Activated CD8-positive, alpha-beta T cell treated with anti-CD3 and anti-CD28 coated beads for 36 hours (primary cell): ENCODE measurements at regions of chr17 and their contacts with region 1.

Region 1: DNA sequence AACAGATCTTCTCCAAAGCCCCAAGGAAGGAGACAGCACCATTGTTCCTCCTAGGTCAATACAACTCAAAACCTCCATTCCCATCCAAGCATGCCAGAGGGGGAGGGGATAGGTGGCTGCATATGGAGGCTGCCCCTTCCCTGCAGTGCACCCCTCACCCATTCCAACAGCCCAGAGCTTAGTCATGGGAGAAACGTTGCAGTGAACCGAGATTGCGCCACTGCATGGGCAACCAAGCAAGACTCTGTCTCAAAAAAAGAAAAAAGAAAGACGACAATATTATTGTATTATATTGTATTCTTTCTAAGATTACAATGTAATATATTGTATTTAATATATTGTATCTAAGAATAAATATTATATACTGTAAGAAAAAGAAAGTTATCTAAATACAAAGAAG is 36.4 kb upstream of the CD300E start:
- DNase-seq: no peak
- ATAC-seq: no peak
- H3K4me3 Mint-ChIP-seq: no peak overlapping the region
- H3K27ac Mint-ChIP-seq: no peak overlapping the region
- H3K4me1 Mint-ChIP-seq: peaks cover 3% of the 10 kb centered on the region
- H3K27me3 Mint-ChIP-seq: peaks cover 17% of the 10 kb centered on the region
- CTCF ChIP-seq: no peak

Region 2: DNA sequence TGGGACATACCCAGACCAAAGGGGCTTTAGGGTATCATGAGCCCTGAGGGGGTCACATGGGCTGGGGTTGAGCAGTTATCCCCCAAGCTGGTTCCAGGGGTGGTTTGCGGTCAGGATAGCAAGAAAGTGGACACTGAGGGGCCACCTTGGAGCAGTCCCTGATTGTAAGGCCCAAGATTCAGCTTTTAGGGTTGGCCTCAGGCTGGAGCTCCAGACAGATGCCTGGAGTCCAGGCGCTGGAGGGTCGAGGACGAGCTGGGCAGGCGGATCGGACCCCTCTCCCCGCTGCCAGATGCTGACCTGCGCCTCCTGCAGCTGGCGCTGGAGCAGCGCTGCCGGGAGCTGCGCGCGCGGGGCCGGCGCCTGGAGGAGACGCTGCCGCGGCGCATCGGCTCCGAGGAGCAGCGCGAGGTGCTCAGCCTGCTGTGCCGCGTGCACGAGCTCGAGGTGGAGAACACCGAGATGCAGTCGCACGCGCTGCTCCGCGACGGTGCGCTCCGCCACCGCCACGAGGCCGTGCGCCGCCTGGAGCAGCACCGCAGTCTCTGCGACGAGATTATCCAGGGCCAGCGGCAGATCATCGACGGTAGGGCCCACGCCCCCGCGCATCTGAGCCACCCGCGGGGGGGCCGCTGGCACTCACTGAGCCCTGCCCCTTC is 308.2 kb before region 1 on chr17:
- CTCF ChIA-PET with region 1: no interaction called
- POLR2A ChIA-PET with region 1: no interaction called
- intact Hi-C with region 1: no loop called
- DNase-seq: peak; percentile 11
- ATAC-seq: peak; percentile 32
- H3K4me3 Mint-ChIP-seq: no peak overlapping the region
- H3K27ac Mint-ChIP-seq: no peak overlapping the region
- H3K4me1 Mint-ChIP-seq: peaks cover 6% of the 10 kb centered on the region
- H3K27me3 Mint-ChIP-seq: peaks cover 46% of the 10 kb centered on the region
- CTCF ChIP-seq: no peak

Region 3: GRCh38 chr17:74647871-74648672 is 11.8 kb before region 1 on chr17:
- CTCF ChIA-PET with region 1: interaction called, 15 read pairs
- POLR2A ChIA-PET with region 1: no interaction called
- intact Hi-C with region 1: no loop called
- DNase-seq: no peak
- ATAC-seq: no peak
- H3K4me3 Mint-ChIP-seq: no peak overlapping the region
- H3K27ac Mint-ChIP-seq: no peak overlapping the region
- H3K4me1 Mint-ChIP-seq: no peaks in the 10 kb centered on the region
- H3K27me3 Mint-ChIP-seq: peaks cover 36% of the 10 kb centered on the region
- CTCF ChIP-seq: no peak

Region 4: GRCh38 chr17:74677558-74678466 is 17.9 kb after region 1 on chr17:
- CTCF ChIA-PET with region 1: interaction called, 22 read pairs
- POLR2A ChIA-PET with region 1: no interaction called
- intact Hi-C with region 1: no loop called
- DNase-seq: no peak
- ATAC-seq: no peak
- H3K4me3 Mint-ChIP-seq: no peak overlapping the region
- H3K27ac Mint-ChIP-seq: no peak overlapping the region
- H3K4me1 Mint-ChIP-seq: peaks cover 16% of the 10 kb centered on the region
- H3K27me3 Mint-ChIP-seq: peaks cover 15% of the 10 kb centered on the region
- CTCF ChIP-seq: no peak

Region 5: GRCh38 chr17:74748529-74749365 is 88.8 kb after region 1 on chr17 and contains the start of gene NHERF1:
- CTCF ChIA-PET with region 1: interaction called, 22 read pairs
- POLR2A ChIA-PET with region 1: no interaction called
- intact Hi-C with region 1: no loop called
- DNase-seq: peak; percentile 94
- ATAC-seq: peak; percentile 89
- H3K4me3 Mint-ChIP-seq: peak within 1 kb of the TSS; percentile 85
- H3K27ac Mint-ChIP-seq: peak within 1 kb of the TSS; percentile 86
- H3K4me1 Mint-ChIP-seq: peaks cover 49% of the 10 kb centered on the region
- H3K27me3 Mint-ChIP-seq: no peaks in the 10 kb centered on the region
- CTCF ChIP-seq: peak; percentile 30
- total RNA-seq, gene NHERF1: 143 to 150 TPM

Region 6: GRCh38 chr17:74770498-74771318 is 110.8 kb after region 1 on chr17:
- CTCF ChIA-PET with region 1: interaction called, 20 read pairs
- POLR2A ChIA-PET with region 1: interaction called, 3 read pairs
- intact Hi-C with region 1: no loop called
- DNase-seq: peak; percentile 78
- ATAC-seq: peak; percentile 88
- H3K4me3 Mint-ChIP-seq: no peak overlapping the region
- H3K27ac Mint-ChIP-seq: peak overlapping the region; percentile 72
- H3K4me1 Mint-ChIP-seq: peaks cover 30% of the 10 kb centered on the region
- H3K27me3 Mint-ChIP-seq: no peaks in the 10 kb centered on the region
- CTCF ChIP-seq: peak; percentile 76

Region 7: GRCh38 chr17:74785096-74785980 is 125.4 kb after region 1 on chr17:
- CTCF ChIA-PET with region 1: interaction called, 11 read pairs
- POLR2A ChIA-PET with region 1: no interaction called
- intact Hi-C with region 1: no loop called
- DNase-seq: peak; percentile 65
- ATAC-seq: peak; percentile 68
- H3K4me3 Mint-ChIP-seq: no peak overlapping the region
- H3K27ac Mint-ChIP-seq: peak overlapping the region; percentile 47
- H3K4me1 Mint-ChIP-seq: peaks cover 54% of the 10 kb centered on the region
- H3K27me3 Mint-ChIP-seq: no peaks in the 10 kb centered on the region
- CTCF ChIP-seq: no peak